Motor neuron (in vitro differentiated cells): ENCODE measurements at regions of chr12 and their contacts with region 1.

Region 1: DNA sequence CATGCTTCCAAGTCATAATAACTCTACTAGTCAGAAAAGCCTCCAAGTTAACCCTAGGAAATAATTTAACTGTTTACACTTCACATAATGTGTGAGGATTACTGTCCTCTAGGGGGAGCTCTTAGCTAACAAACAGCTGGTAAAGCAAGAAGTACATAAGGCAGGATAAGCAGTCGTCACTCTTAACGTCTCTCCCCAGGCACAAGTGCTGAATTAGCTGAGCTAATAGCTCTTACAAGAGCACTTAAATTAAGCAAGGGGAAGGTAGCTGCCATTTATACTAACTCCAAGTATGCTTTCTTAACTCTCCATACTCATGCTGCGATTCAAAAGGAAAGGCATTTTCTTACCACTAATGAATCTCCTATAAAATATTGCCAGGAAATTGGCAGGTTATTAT is 79.3 kb upstream of the TSPAN11 start:
- ATAC-seq: peak in 3 of 8 experiments; percentile 13 to 40 (median 29)
- H3K4me3 ChIP-seq: no peak overlapping the region
- H3K27ac ChIP-seq: no peak overlapping the region
- H3K4me1 ChIP-seq: peaks cover 7% of the 10 kb centered on the region in 2 donors

Region 2: GRCh38 chr12:30914986-30915591 is 67.8 kb after region 1 on chr12:
- in situ Hi-C with region 1: no loop called
- ATAC-seq: no peak
- H3K4me3 ChIP-seq: no peak overlapping the region
- H3K27ac ChIP-seq: no peak overlapping the region
- H3K4me1 ChIP-seq: no peaks in the 10 kb centered on the region

Region 3: DNA sequence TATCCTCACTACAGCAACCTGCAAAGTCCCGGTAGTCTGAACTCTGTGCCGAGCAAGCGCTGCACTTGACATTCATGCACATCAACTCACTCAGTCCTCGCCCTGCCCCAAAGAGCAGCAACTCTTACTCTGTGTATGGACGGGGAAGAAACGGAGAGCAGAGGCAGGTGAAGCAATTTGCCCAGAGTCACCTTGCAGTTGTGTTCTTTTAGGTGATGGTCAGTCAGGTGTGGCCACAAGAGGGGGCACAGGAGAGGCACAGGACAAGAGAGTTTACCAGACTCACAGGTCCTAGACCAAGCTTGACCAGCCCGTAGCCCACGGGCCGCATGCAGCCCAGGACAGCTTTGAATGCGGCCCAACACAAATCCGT is 118.3 kb after region 1 on chr12:
- in situ Hi-C with region 1: no loop called
- ATAC-seq: peak in 1 of 8 experiments; percentile 22
- H3K4me3 ChIP-seq: no peak overlapping the region
- H3K27ac ChIP-seq: no peak overlapping the region
- H3K4me1 ChIP-seq: no peaks in the 10 kb centered on the region

Region 4: DNA sequence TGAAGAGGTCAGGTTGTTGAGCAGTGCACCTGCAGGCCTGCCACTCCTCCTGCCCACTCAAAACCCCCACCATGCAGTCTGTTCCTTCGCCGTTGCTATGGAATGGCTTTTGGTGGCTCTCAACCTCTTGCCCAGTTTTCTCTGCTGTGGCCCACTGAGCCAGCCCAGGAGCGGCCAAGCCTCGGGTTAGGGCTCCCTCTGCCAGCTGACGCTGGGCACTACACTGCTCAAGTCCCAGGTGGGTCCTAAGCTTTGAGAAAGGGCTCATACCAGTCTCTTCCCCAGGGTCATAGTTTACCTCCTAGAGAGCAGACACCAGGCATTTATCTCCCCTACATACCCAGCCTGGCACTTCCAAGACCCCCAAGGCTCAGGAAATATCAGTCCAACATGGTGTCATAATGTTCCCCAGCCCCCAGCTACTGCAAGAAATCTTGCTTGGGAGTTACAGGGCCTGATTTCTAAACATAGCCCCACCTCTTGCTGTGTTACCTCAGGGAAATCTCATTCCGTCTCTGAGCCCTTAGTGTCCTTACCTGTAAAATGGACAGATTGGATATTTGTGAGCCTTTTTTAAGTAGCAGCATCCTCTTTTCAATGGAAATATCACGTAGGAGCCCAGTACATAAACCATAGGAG is 138.7 kb after region 1 on chr12:
- in situ Hi-C with region 1: loop called in 5 of 9 experiments (anchors 10 to 25 kb)
- ATAC-seq: peak; percentile 33 to 81 (median 53)
- H3K4me3 ChIP-seq: no peak overlapping the region
- H3K27ac ChIP-seq: no peak overlapping the region
- H3K4me1 ChIP-seq: peaks cover 3 to 9% of the 10 kb centered on the region in 2 donors

Region 5: DNA sequence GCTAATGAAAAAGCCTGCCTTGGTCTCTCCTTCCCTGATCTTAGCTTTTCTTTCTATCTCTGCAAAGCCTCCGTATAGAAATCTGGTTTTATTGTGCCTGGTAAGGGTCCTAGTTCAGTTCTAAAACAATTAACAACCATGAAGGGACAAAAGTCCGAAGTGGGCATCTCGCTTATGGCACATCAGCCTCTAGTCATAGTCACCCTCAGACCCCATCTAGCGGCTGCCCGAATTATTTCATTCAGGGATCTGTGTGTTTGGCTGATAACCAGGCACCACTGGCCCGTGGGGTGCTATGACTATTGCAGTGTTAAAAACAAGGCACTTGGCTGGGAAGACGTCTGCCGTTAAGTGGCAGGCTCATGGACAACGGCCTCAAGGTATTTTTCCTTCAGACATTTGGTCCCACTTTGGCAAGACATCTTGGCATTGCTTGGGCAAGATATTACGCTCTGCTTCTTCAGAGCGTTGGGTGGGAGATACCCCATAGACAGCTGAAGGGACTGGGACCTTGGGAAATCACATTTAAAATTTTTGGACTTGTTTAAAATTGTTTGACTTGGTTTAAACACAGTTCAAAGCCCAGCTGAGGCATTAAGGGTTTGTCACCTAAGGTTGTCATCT is 391.6 kb after region 1 on chr12:
- in situ Hi-C with region 1: loop called in 3 of 9 experiments (anchors 25 kb)
- ATAC-seq: peak; percentile 62 to 88 (median 72)
- H3K4me3 ChIP-seq: no peak overlapping the region
- H3K27ac ChIP-seq: no peak overlapping the region
- H3K4me1 ChIP-seq: peaks cover 0 to 4% of the 10 kb centered on the region in 2 donors

Region 6: DNA sequence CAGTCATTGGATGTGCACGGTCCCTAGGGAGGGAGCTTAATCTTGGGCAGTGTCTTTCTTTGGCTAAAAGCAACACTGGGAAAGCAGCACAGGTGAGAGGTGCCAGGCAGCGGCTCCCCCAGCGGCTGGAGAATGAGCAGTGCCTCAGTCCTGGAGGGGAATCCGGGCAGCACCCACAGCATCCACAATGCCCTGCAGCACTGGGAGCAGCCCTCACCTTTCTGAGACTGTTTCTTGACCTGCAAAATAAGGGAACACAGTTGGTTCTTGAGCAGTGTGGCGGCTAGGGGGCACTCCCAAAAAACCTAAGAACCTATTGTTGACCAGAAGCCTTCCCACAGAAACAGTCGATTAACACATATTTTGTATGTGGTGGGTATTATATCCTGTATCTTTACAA is 402.9 kb after region 1 on chr12:
- in situ Hi-C with region 1: loop called in 4 of 9 experiments (anchors 25 kb)
- ATAC-seq: no peak
- H3K4me3 ChIP-seq: no peak overlapping the region
- H3K27ac ChIP-seq: no peak overlapping the region
- H3K4me1 ChIP-seq: no peaks in the 10 kb centered on the region